ENCODE measurements at regions of chr14 and their contacts with region 1.

Region 1: GRCh38 chr14:71371711-71372396 is 464.6 kb downstream of the PCNX1 start:
- DNase-seq: peak; percentile 80
- H3K4me3 ChIP-seq: peak overlapping the region in 2 of 3 experiments; percentile 0 to 44
- H3K27ac ChIP-seq: peak overlapping the region; percentile 88
- H3K4me1 ChIP-seq: peaks cover 19% of the 10 kb centered on the region
- H3K27me3 ChIP-seq: no peaks in the 10 kb centered on the region
- CTCF ChIP-seq: no peak
- POLR2A ChIP-seq: peak; percentile 43

Region 2: GRCh38 chr14:71651228-71651627 is 279.4 kb after region 1 on chr14:
- CTCF ChIA-PET with region 1: no interaction called
- POLR2A ChIA-PET with region 1: no interaction called
- dilution Hi-C with region 1: no loop called
- intact Hi-C with region 1: loop called (anchors 5 kb)
- DNase-seq: peak; percentile 96
- H3K4me3 ChIP-seq: peak overlapping the region in 1 of 3 experiments; percentile 29
- H3K27ac ChIP-seq: peak overlapping the region; percentile 85
- H3K4me1 ChIP-seq: peaks cover 23% of the 10 kb centered on the region
- H3K27me3 ChIP-seq: no peaks in the 10 kb centered on the region
- CTCF ChIP-seq: no peak
- POLR2A ChIP-seq: no peak

Measured in endothelial cell of umbilical vein (primary cell).